Activated CD4-positive, alpha-beta T cell treated with anti-CD3 and anti-CD28 coated beads for 36 hours (primary cell): ENCODE measurements at regions of chr9 and their contacts with region 1.

Region 1: DNA sequence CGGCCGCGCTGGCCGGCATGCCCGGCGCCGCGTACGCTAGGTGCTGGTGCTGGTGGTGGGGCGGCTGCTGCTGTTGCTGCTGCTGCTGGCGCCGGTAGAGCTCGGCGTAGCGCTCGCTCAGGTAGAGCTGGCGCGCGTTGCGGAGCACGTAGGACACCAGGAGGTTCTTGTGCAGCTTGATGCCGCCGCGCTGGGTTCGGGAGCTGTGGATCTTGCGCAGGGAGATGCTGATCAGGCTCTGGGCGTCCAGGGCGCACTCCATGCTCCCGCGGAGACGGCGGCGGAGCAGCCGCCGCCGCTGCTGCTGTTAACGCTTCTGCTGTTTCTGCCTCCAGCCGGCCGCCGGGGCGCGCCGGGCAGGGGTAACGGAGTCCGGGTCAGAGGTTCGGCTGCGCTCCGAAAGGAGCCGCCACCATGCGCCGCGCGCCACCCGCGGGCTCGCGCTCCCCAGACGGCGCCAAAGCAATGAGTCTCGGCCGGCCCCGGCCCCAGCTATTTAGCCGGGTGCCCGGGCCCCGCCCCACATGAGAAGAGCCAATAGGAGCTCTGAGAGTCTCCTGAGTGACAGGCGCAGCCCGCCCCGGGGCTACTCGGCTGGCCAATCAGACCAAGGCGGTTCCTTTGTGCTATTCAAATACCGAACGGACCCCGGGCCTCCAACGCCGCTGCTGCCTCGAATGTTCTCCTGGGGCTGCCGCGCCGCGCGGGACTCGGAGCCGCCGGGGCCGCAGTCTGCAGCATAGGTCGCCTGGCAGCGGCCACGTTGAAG is at the start of gene IER5L:
- DNase-seq: peak; percentile 96
- ATAC-seq: peak; percentile 88
- H3K4me3 Mint-ChIP-seq: peak within 1 kb of the TSS; percentile 83
- H3K27ac Mint-ChIP-seq: peak within 1 kb of the TSS; percentile 65
- H3K4me1 Mint-ChIP-seq: peaks cover 7% of the 10 kb centered on the region
- H3K27me3 Mint-ChIP-seq: peaks cover 3% of the 10 kb centered on the region
- total RNA-seq, gene IER5L: 2.6 to 2.8 TPM

Region 2: DNA sequence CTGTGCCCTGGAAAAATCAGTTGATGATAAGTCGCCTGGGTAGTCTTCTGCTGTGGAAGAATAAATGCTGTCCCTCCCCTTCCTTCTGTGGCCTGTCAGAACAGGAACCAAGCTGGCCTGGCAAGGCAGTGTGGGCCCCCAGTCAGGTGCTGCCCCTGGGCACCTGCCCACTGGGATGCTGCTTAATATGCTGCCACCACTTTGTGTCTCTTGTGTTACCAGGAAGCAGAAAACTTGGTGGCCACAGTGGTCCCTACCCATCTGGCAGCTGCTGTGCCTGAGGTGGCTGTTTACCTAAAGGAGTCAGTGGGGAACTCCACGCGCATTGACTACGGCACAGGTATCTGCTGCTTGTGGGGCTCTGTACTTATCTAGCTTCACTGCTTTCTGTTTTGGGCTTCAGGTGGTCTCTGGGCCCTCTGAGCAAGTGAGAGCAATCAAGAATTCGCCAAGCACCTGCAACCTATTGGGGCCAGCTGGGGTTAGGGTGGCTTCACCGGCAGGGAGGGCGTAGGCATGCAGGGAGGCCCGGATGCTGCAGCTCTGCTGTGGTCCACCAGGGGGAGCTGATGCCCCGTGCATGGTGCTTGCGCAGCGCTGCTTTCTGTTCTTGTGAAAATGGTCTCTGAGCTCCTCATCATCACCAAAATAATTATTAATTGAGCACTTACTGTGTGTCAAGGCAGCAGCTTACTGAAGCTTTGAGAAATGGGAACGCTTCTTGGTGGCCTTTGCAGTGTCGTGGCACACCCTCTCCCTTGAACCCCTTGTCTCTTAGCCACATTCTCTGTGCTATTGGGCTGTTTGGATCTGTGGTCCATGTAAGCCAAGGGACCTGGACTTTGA is 46.5 kb before region 1 on chr9:
- CTCF ChIA-PET with region 1: interaction called, 14 read pairs
- POLR2A ChIA-PET with region 1: no interaction called
- intact Hi-C with region 1: no loop called
- DNase-seq: peak; percentile 91
- ATAC-seq: peak; percentile 100
- H3K4me3 Mint-ChIP-seq: no peak overlapping the region
- H3K27ac Mint-ChIP-seq: no peak overlapping the region
- H3K4me1 Mint-ChIP-seq: peaks cover 6% of the 10 kb centered on the region
- H3K27me3 Mint-ChIP-seq: no peaks in the 10 kb centered on the region

Region 3: GRCh38 chr9:129237195-129237611 is 59.2 kb after region 1 on chr9:
- CTCF ChIA-PET with region 1: interaction called, 13 read pairs
- POLR2A ChIA-PET with region 1: interaction called, 5 read pairs
- intact Hi-C with region 1: loop called (anchors 1 to 2 kb)
- DNase-seq: peak; percentile 84
- ATAC-seq: peak; percentile 80
- H3K4me3 Mint-ChIP-seq: peak overlapping the region; percentile 71
- H3K27ac Mint-ChIP-seq: peak overlapping the region; percentile 94
- H3K4me1 Mint-ChIP-seq: peaks cover 51% of the 10 kb centered on the region
- H3K27me3 Mint-ChIP-seq: no peaks in the 10 kb centered on the region

Region 4: DNA sequence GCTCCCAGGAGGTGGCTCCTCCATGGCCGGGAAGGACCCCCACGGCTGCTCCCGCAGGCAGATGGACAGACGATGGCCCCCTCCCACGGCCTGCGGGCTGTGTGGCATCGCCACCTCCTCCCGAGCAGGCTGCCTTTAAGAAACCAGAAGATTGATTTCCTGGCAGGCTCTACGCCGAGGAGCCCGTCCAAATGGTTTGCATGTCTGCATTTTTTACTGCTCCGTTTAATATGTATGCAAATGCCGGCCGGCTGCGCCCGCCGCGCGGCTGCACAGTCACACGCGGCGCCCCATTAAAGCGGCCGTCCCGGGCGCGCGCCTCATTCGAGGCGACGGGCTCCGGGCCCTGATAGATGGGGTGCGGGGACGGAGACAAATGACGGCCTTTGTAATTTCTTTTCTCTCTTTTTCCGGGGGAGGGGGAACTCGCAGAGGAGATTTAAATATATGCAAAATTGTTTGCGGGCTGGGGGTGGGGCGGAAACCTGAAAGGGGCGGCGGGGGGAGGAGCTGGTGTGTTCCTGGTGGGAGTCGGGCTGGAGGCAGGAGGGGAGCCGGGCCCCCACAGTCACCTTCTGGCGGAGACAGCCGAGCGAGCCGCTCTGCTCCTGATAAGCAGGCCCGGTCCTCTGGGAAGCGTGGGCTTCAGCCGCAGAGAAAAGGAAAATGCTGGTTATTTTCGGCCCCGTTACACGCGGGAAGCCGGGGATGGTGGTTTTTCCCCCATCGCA is 158.8 kb after region 1 on chr9:
- CTCF ChIA-PET with region 1: no interaction called
- POLR2A ChIA-PET with region 1: no interaction called
- intact Hi-C with region 1: loop called in 1 of 2 experiments (anchors 5 kb)
- DNase-seq: peak; percentile 59
- ATAC-seq: peak; percentile 58
- H3K4me3 Mint-ChIP-seq: peak overlapping the region; percentile 35
- H3K27ac Mint-ChIP-seq: no peak overlapping the region
- H3K4me1 Mint-ChIP-seq: peaks cover 33% of the 10 kb centered on the region
- H3K27me3 Mint-ChIP-seq: peaks cover 4% of the 10 kb centered on the region

Region 5: DNA sequence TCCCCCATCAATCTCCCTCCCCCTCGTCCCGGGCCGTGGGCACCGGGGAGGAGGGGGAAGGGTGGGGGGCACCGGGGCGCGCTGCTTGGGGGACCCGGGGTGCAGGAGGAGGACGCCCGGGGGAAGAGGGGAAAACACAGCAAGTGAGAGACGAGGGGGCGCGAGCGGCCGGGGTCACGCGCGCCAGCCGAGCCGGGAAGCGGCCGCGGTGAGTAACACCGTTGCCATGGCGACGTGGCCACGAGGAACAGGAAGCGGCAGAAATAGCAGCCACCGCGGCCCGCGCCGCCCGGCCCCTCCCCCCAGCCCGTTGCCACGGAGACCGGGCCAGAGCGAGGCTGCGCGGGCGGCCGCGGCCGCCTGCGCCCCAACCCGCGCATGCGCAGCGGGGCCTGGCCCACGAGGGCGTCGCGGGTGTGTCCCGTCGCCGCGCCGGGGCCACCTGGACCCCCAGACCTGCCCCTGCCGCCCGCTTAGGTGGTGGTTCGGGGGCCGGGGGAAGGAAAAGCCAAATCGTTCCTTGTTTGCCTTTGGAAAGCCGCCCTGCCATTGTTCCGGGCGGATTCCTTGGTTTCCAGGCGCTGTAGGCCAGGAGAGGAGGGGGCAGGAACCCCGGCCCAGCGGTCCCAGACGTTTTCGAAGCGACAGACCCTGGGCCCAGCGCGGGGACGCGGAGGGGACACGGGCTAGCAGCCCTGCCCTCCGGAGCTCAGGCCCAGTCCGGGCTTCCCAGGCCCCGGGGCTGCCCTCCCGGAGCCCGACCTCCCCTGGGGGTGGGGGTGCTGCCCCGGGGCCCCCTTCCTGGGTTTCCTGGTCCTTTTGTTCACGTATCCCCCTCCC is 235.8 kb after region 1 on chr9:
- CTCF ChIA-PET with region 1: no interaction called
- POLR2A ChIA-PET with region 1: interaction called, 3 read pairs
- intact Hi-C with region 1: loop called in 1 of 2 experiments (anchors 1 kb)
- DNase-seq: peak; percentile 99
- ATAC-seq: peak; percentile 89
- H3K4me3 Mint-ChIP-seq: peak overlapping the region; percentile 75
- H3K27ac Mint-ChIP-seq: peak overlapping the region; percentile 94
- H3K4me1 Mint-ChIP-seq: peaks cover 23% of the 10 kb centered on the region
- H3K27me3 Mint-ChIP-seq: no peaks in the 10 kb centered on the region

Region 6: DNA sequence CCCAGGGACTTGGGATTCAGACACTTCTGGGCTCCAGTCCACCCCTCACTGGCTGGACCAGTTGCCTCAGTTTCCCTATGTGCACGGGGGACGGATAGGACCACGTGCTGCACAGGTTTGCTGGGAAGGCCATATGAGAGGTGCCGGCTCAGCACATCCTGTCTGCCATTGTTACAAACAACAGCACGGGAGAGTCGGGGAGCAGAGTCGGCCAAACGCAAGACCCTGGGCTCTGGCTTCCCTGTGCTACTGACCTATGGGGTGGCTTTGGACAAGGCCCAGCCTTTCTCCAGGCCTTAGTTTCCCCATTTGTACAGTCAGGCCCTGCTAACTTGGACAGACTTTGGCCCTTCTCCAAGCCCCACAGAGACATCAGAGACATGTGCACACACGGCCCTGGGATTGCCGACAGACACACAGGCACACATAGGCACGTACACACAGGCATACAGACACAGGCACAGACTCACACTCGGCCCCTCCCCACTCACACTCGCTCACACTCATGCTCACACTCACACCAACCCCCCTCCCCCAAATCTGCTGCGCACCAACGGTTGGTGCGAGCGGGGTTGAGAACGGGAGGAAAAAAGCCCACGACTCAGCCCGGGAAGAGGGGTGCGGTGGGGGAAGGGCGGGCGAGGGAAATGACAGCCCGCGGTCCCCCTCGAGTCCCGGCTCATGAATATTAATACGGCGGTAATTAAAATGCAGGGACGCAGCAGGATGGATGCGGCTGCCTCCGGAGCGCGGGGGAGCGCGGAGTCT is 309.9 kb after region 1 on chr9:
- CTCF ChIA-PET with region 1: no interaction called
- POLR2A ChIA-PET with region 1: no interaction called
- intact Hi-C with region 1: loop called (anchors 1 to 10 kb)
- DNase-seq: peak; percentile 76
- ATAC-seq: peak; percentile 34
- H3K4me3 Mint-ChIP-seq: peak overlapping the region; percentile 93
- H3K27ac Mint-ChIP-seq: peak overlapping the region; percentile 96
- H3K4me1 Mint-ChIP-seq: peaks cover 66% of the 10 kb centered on the region
- H3K27me3 Mint-ChIP-seq: no peaks in the 10 kb centered on the region

Region 7: GRCh38 chr9:129802851-129803675 is 625.1 kb after region 1 on chr9 and contains the start of gene TOR1B:
- CTCF ChIA-PET with region 1: no interaction called
- POLR2A ChIA-PET with region 1: no interaction called
- intact Hi-C with region 1: loop called in 1 of 2 experiments (anchors 2 kb)
- DNase-seq: peak; percentile 95
- ATAC-seq: peak; percentile 92
- H3K4me3 Mint-ChIP-seq: peak within 1 kb of the TSS; percentile 81
- H3K27ac Mint-ChIP-seq: peak within 1 kb of the TSS; percentile 90
- H3K4me1 Mint-ChIP-seq: peaks cover 25% of the 10 kb centered on the region
- H3K27me3 Mint-ChIP-seq: no peaks in the 10 kb centered on the region
- total RNA-seq, gene TOR1B: 18.0 to 22.1 TPM